ENCODE measurements at regions of chr3 and their contacts with region 1.

Region 1: GRCh38 chr3:51004235-51004634 is 329.5 kb downstream of the DOCK3 start:
- DNase-seq: no peak
- ATAC-seq: no peak
- H3K4me3 ChIP-seq: no peak overlapping the region
- H3K4me3 Mint-ChIP-seq: no peak overlapping the region
- H3K27ac ChIP-seq: no peak overlapping the region
- H3K27ac Mint-ChIP-seq: no peak overlapping the region
- H3K4me1 ChIP-seq: no peaks in the 10 kb centered on the region
- H3K4me1 Mint-ChIP-seq: no peaks in the 10 kb centered on the region
- H3K27me3 ChIP-seq: no peaks in the 10 kb centered on the region
- H3K27me3 Mint-ChIP-seq: no peaks in the 10 kb centered on the region
- CTCF ChIP-seq: no peak

Region 2: GRCh38 chr3:51044982-51045381 is 40.7 kb after region 1 on chr3:
- CTCF ChIA-PET with region 1: no interaction called
- POLR2A ChIA-PET with region 1: no interaction called
- intact Hi-C with region 1: loop called in 1 of 2 experiments (anchors 5 kb)
- DNase-seq: no peak
- ATAC-seq: no peak
- H3K4me3 ChIP-seq: no peak overlapping the region
- H3K4me3 Mint-ChIP-seq: no peak overlapping the region
- H3K27ac ChIP-seq: no peak overlapping the region
- H3K27ac Mint-ChIP-seq: no peak overlapping the region
- H3K4me1 ChIP-seq: no peaks in the 10 kb centered on the region
- H3K4me1 Mint-ChIP-seq: peaks cover 16% of the 10 kb centered on the region
- H3K27me3 ChIP-seq: no peaks in the 10 kb centered on the region
- H3K27me3 Mint-ChIP-seq: no peaks in the 10 kb centered on the region
- CTCF ChIP-seq: no peak